Heart left ventricle (tissue), 16 donors: ENCODE measurements at regions of chr22 and their contacts with region 1.

Region 1: DNA sequence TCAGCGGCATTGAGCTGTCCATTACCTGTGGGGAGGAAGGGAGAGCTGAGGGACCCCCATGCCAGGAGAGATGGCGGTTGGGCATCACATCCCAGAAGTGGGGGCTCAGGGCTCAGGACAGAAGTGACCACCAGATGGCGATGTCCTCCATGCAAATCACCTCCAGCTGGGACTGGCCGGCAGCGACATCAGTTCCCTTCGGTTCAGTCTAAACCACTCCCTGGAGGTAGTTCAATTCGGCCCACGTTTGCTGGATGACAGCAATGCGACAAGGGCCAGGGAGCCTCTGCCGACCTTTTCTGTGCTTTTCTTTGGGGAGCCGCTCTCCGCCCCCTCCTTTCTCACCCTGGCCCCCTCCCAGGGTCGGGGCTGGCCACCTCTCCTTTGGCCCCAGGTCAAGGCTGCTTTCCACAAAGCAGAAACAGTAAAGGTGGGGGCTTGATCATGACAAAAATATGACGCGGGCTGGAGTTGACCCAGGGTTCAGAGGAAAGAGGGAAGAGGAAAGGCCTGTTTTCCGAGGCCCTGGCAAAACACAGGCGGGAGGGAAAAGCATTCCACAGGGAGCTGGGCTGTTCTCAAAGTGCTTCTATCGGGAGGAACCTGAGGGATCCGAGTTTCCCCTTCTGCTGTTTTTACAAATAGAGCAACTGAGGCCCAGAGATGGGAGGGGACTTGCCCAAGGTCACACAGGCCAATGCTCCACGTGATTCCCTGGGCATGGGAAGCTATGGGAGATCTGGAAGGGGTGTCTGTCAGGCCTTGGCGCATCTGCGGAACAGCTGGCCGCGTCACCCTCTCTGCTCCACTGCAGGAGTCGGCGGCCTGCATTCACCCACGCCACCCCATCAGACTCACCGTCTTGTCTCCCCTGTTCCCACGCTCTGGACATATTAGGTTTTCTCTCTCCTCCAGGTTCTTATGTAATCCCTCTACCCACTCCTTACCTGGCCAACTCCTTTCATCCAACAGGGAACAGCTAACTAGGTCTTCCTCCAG is 54.7 kb downstream of the FBXO7 start:
- DNase-seq: peak; percentile 88 to 92 (median 90)
- ATAC-seq: peak; percentile 62 to 75 (median 65)
- H3K4me3 ChIP-seq: peak overlapping the region in 2 of 12 donors; percentile 13 to 24
- H3K27ac ChIP-seq: peak overlapping the region; percentile 50 to 94 (median 80)
- H3K4me1 ChIP-seq: peaks cover 5 to 58% (median 50%) of the 10 kb centered on the region in 12 donors
- H3K27me3 ChIP-seq: no peaks in the 10 kb centered on the region
- CTCF ChIP-seq: peak; percentile 79 to 94 (median 90)
- POLR2A ChIP-seq: no peak

Region 2: DNA sequence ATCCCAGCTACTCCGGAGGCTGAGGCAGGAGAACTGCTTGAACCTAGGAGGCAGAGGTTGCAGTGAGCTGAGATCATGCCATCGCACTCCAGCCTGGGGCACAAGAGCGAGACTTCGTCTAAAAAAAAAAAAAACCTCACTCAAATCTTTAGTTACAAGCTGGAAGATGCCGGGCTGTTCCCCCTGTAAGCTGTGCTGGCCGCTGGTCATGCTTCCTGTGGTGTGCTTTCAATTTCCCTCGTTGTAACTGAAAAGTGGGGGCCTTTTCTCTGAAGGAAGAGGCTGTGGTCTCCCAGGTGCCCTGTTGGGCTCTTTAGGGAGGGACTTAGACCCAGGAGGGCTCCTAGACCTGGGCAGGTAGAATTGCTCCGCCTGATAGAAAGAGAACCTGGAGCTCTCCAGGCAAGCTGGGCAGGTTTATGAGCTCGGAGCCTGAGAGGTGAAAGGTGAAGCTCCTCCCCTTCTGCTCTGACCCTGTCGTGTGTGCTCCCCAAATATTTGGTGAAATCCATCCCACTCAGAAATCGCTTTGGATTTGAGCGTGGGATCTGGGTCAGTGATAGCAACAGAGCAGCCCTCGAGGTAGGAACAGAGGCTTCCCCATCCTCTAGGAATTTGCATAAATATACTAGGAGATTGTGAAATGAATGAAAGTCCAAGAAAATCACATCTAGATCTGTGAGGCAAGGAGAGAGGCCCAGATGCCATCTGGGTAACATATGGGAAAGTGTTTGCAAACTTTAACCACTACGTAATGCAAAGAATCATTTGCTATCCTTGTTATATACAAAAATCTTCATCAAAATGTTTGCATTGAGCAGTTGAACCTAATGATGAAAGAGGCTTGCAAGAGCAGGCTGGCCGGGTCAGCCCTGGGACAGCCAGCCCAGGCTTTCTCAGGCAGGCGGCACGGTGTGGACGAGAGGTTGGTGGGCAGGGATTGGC is 99.6 kb after region 1 on chr22:
- intact Hi-C with region 1: loop called in 4 of 10 experiments (anchors 5 kb)
- DNase-seq: no peak
- ATAC-seq: no peak
- H3K4me3 ChIP-seq: no peak overlapping the region
- H3K27ac ChIP-seq: peak overlapping the region; percentile 55 to 96 (median 83)
- H3K4me1 ChIP-seq: peaks cover 9 to 71% (median 36%) of the 10 kb centered on the region in 12 donors
- H3K27me3 ChIP-seq: no peaks in the 10 kb centered on the region
- CTCF ChIP-seq: no peak
- POLR2A ChIP-seq: no peak

Region 3: DNA sequence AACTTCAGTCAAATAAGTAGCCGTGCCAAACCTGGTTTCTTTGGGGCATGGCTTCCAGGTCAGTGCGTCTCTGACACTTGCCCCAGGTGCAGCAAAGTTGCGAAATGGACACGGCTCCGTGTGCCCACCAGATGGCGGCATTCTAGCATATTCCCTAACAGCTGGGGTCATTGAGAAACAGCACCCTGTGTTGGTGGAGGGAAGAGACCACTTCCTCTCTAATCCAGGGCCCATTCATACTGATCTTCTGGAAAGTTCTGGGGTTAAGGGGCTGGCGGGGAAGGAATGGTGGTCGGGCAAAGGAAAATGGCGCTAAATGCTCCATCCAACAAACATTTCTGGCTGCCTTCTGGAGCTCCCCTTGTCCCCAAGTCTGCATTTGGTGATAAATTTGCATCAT is 131.0 kb after region 1 on chr22:
- intact Hi-C with region 1: loop called in 6 of 10 experiments (anchors 2 to 5 kb)
- DNase-seq: peak; percentile 66 to 79 (median 73)
- ATAC-seq: peak in 3 of 4 donors; percentile 64 to 79 (median 78)
- H3K4me3 ChIP-seq: no peak overlapping the region
- H3K27ac ChIP-seq: peak overlapping the region in 3 of 12 donors; percentile 32 to 69 (median 42)
- H3K4me1 ChIP-seq: peaks cover 0 to 27% (median 0%) of the 10 kb centered on the region in 12 donors
- H3K27me3 ChIP-seq: no peaks in the 10 kb centered on the region
- CTCF ChIP-seq: peak; percentile 66 to 88 (median 74)
- POLR2A ChIP-seq: no peak

Region 4: DNA sequence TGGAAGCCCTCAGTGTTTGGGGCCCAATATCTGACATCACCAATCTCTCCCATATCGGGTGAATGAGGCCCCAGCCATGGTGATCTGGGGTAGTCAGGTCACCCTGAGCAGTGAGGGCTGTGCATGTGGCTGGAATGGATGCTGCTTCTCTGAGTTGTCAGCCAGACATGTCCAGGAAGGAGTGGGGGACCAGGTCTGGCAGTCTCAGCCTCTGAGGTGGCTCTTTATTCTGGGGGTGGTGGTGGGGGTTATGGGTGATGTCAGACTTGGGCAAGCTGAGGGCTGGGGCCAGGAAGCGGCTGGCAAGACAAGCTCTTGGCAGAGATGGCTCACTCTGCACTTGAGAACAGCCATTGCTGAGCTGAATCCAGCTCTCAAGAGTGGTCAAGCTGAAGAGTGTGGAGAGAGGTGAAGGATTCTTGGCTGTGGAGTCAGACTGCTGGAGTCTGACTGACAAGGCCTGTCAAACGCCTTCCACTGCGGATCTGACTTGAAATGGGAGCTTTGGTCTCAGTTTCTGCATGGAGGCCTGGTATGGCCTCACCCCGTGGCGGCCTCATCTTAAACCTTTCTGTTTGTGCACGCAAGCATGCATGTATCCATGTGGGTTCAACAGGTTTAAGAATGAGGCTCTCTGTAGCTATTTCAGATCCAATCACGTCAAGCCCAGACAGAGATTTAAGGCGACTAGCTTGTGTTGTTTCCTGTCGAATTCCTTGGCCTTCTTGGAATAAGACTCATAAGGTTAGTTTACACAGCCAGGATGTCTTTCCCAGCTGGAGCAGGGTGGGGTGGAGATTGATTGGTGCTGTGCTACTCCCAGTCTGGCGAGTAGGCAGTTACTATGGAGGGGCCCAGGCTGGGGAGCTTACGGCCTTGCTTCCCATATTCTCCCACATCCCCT is 188.3 kb after region 1 on chr22:
- intact Hi-C with region 1: no loop called
- DNase-seq: peak in 4 of 5 donors; percentile 57 to 71 (median 62)
- ATAC-seq: peak; percentile 62 to 95 (median 79)
- H3K4me3 ChIP-seq: no peak overlapping the region
- H3K27ac ChIP-seq: peak overlapping the region; percentile 9 to 82 (median 71)
- H3K4me1 ChIP-seq: peaks cover 0 to 41% (median 21%) of the 10 kb centered on the region in 12 donors
- H3K27me3 ChIP-seq: no peaks in the 10 kb centered on the region
- CTCF ChIP-seq: no peak
- POLR2A ChIP-seq: no peak

Region 5: DNA sequence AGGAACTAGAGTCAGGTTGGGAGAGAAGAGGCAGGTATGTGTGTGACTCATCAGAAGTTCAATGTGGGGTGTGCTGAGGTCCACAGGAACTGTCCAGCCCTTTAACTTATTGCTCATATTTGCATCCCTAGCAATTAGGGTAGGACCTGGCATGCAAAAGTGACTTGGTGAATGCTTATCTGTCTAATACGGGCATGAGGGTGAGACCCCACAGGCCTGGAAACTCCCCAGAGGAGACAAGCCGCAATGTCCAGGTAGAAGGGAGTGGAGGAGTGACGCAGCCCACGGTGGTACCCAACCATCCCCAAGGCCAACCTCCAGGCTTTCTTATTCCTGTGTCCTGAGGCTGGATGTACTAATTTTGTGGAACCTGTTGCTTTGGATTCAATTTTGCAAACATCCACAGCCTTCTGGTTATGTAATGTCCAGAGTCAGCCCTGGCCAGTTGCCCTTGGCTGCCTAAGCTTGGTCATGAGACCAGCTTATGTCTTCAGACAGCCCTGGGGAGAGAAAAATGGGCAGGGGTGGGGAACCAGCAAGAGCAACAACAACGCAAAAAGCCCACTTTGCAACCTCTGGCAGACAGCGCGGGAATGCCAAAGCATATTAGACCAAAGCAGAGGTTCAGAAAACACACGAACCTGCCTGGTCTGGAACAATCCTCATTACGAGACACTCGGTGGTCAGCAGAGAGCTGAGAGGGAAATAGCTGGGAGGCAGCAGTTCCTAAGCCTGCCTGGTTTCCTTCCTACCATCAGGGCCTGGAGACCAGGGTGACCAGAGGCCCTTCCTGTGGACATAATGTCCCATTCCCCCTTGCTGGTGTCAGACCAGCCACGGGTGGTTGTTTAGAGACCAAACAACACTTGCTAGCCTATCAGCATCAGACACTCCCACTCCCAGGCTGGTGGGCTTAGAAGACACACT is 321.6 kb after region 1 on chr22:
- intact Hi-C with region 1: loop called in 1 of 10 experiments (anchors 1 kb)
- DNase-seq: peak; percentile 67 to 89 (median 77)
- ATAC-seq: peak; percentile 23 to 53 (median 28)
- H3K4me3 ChIP-seq: no peak overlapping the region
- H3K27ac ChIP-seq: peak overlapping the region; percentile 69 to 94 (median 83)
- H3K4me1 ChIP-seq: peaks cover 41 to 100% (median 85%) of the 10 kb centered on the region in 12 donors
- H3K27me3 ChIP-seq: no peaks in the 10 kb centered on the region
- CTCF ChIP-seq: no peak
- POLR2A ChIP-seq: no peak

Region 6: DNA sequence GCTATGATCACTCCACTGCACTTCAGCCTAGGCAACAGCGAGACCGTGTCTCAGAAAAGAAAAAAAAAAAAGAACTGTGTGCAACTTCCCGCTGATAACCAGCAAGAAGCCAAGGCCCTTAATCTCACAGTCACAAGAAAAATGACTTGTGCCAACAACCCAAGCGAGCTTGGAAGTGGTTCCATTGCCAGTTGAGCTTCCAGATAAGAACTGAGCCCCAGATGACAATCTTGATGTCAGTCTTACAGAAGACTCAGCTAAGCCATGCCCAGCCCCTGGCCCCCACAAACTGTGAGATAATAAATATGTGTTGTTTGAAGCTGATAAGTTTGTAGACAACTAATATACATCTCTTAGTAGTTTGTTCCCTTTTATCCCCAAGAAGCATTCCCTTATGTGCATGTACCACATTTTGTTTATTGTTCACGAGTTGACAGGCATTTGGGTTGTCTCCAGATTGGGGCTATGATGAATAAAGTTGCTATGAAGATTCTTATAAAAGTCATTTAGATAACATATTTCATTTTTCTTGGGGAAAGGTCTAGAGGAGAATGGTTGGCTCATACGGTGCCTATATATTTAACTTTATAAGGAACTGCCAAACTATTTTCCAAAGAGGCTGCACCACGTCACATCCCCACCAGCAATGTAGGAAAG is 358.2 kb after region 1 on chr22:
- intact Hi-C with region 1: no loop called
- DNase-seq: no peak
- ATAC-seq: no peak
- H3K4me3 ChIP-seq: no peak overlapping the region
- H3K27ac ChIP-seq: peak overlapping the region in 8 of 12 donors; percentile 15 to 84 (median 61)
- H3K4me1 ChIP-seq: peaks cover 0 to 22% (median 14%) of the 10 kb centered on the region in 12 donors
- H3K27me3 ChIP-seq: no peaks in the 10 kb centered on the region
- CTCF ChIP-seq: no peak
- POLR2A ChIP-seq: no peak

Region 7: GRCh38 chr22:32979606-32980005 is 450.3 kb after region 1 on chr22:
- intact Hi-C with region 1: loop called in 1 of 10 experiments (anchors 5 kb)
- DNase-seq: no peak
- ATAC-seq: no peak
- H3K4me3 ChIP-seq: no peak overlapping the region
- H3K27ac ChIP-seq: no peak overlapping the region
- H3K4me1 ChIP-seq: no peaks in the 10 kb centered on the region
- H3K27me3 ChIP-seq: no peaks in the 10 kb centered on the region
- CTCF ChIP-seq: no peak
- POLR2A ChIP-seq: no peak

Region 8: GRCh38 chr22:33049119-33049729 is 519.9 kb after region 1 on chr22:
- intact Hi-C with region 1: loop called in 1 of 10 experiments (anchors 5 kb)
- DNase-seq: peak in 4 of 5 donors; percentile 71 to 82 (median 75)
- ATAC-seq: peak in 3 of 4 donors; percentile 73 to 86 (median 79)
- H3K4me3 ChIP-seq: no peak overlapping the region
- H3K27ac ChIP-seq: no peak overlapping the region
- H3K4me1 ChIP-seq: peaks cover 0 to 5% (median 0%) of the 10 kb centered on the region in 12 donors
- H3K27me3 ChIP-seq: peaks cover 0 to 28% (median 13%) of the 10 kb centered on the region in 9 donors
- CTCF ChIP-seq: peak; percentile 78 to 97 (median 88)
- POLR2A ChIP-seq: no peak

Region 9: DNA sequence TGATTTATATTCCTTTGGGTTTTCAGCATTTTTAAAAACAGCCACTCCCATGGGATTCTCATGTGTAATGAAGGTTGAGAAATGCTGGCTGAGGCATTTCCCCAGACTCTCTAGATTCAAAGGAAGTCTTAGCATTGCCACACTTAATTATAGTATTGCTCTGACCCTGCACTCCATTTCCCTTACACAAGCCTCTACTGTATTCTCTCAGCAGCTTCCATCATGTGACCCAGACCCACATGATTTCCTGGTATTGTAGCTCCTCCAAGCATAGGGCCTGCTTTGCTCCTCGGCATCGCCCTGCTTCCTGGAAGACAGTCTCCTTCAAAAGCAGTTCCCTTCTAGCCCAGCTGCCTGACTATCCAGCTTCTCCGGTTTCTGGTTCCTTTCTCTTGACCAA is 1129.5 kb after region 1 on chr22:
- intact Hi-C with region 1: no loop called
- DNase-seq: peak in 4 of 5 donors; percentile 66 to 75 (median 69)
- ATAC-seq: peak; percentile 49 to 91 (median 76)
- H3K4me3 ChIP-seq: no peak overlapping the region
- H3K27ac ChIP-seq: peak overlapping the region in 11 of 12 donors; percentile 16 to 74 (median 61)
- H3K4me1 ChIP-seq: peaks cover 0 to 40% (median 12%) of the 10 kb centered on the region in 12 donors
- H3K27me3 ChIP-seq: no peaks in the 10 kb centered on the region
- CTCF ChIP-seq: no peak
- POLR2A ChIP-seq: no peak